IMR-90 (cell line): ENCODE measurements at regions of chr10 and their contacts with region 1.

Region 1: GRCh38 chr10:69515699-69516259 is 57.4 kb downstream of the NEUROG3 start:
- DNase-seq: peak; percentile 55
- ATAC-seq: peak; percentile 99
- H3K4me3 ChIP-seq: no peak overlapping the region
- H3K27ac ChIP-seq: no peak overlapping the region
- H3K4me1 ChIP-seq: no peaks in the 10 kb centered on the region
- H3K27me3 ChIP-seq: peaks cover 24% of the 10 kb centered on the region
- CTCF ChIP-seq: peak; percentile 83
- POLR2A ChIP-seq: no peak
- RAD21 ChIP-seq: peak; percentile 89

Region 2: GRCh38 chr10:69438242-69439068 is 77.3 kb before region 1 on chr10:
- CTCF ChIA-PET with region 1: no interaction called
- POLR2A ChIA-PET with region 1: no interaction called
- dilution Hi-C with region 1: no loop called
- in situ Hi-C with region 1: no loop called
- intact Hi-C with region 1: no loop called
- DNase-seq: peak; percentile 16
- ATAC-seq: peak; percentile 45; the same call in 1 of the 2 replicates
- H3K4me3 ChIP-seq: no peak overlapping the region
- H3K27ac ChIP-seq: peak overlapping the region; percentile 5; the same call in 1 of the 2 replicates
- H3K4me1 ChIP-seq: peaks cover 12% of the 10 kb centered on the region
- H3K27me3 ChIP-seq: peaks cover 13% of the 10 kb centered on the region
- CTCF ChIP-seq: no peak
- POLR2A ChIP-seq: no peak
- RAD21 ChIP-seq: no peak

Region 3: DNA sequence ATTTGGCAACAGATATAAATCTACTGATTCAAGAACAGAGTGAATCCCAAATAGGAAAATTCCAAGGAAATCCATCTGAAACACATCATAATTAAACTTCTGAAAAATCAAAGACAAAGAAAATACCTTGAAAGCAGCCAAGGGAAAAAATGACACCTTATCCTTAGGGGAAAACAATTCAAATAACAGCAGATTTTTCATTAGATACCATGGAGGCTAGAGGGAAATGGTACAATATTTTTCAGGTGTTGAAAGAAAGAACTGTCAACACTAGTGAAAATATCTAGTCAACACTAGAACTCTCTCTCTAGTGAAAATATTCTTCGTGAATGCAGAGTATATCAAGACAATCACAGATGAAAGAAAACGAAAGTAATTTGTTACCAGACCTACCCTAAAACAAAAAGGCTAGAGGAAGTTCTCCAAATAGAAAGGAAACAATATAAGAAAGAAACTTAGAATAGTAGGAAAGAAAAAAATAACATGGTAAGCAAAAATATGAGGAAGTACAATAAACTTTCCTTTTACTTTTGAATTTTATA is 108.5 kb after region 1 on chr10:
- CTCF ChIA-PET with region 1: no interaction called
- POLR2A ChIA-PET with region 1: no interaction called
- dilution Hi-C with region 1: no loop called
- in situ Hi-C with region 1: no loop called
- intact Hi-C with region 1: loop called (anchors 5 kb)
- DNase-seq: no peak
- ATAC-seq: no peak
- H3K4me3 ChIP-seq: no peak overlapping the region
- H3K27ac ChIP-seq: no peak overlapping the region
- H3K4me1 ChIP-seq: no peaks in the 10 kb centered on the region
- H3K27me3 ChIP-seq: peaks cover 43% of the 10 kb centered on the region
- CTCF ChIP-seq: no peak
- POLR2A ChIP-seq: no peak
- RAD21 ChIP-seq: no peak

Region 4: GRCh38 chr10:69639291-69640195 is 123.8 kb after region 1 on chr10:
- CTCF ChIA-PET with region 1: interaction called, 24 read pairs
- POLR2A ChIA-PET with region 1: no interaction called
- dilution Hi-C with region 1: no loop called
- in situ Hi-C with region 1: loop called (anchors 5 kb)
- intact Hi-C with region 1: loop called (anchors 1 kb)
- DNase-seq: peak; percentile 56
- ATAC-seq: peak; percentile 87
- H3K4me3 ChIP-seq: no peak overlapping the region
- H3K27ac ChIP-seq: no peak overlapping the region
- H3K4me1 ChIP-seq: no peaks in the 10 kb centered on the region; the same call in 1 of the 2 replicates
- H3K27me3 ChIP-seq: peaks cover 72% of the 10 kb centered on the region
- CTCF ChIP-seq: peak; percentile 81
- POLR2A ChIP-seq: no peak
- RAD21 ChIP-seq: peak; percentile 78

Region 5: GRCh38 chr10:69684020-69684980 is 168.5 kb after region 1 on chr10:
- CTCF ChIA-PET with region 1: no interaction called
- POLR2A ChIA-PET with region 1: no interaction called
- dilution Hi-C with region 1: no loop called
- in situ Hi-C with region 1: no loop called
- intact Hi-C with region 1: no loop called
- DNase-seq: peak; percentile 22
- ATAC-seq: peak; percentile 57
- H3K4me3 ChIP-seq: no peak overlapping the region
- H3K27ac ChIP-seq: no peak overlapping the region
- H3K4me1 ChIP-seq: peaks cover 7% of the 10 kb centered on the region; the same call in 1 of the 2 replicates
- H3K27me3 ChIP-seq: peaks cover 59% of the 10 kb centered on the region
- CTCF ChIP-seq: no peak
- POLR2A ChIP-seq: no peak
- RAD21 ChIP-seq: no peak